ENCODE measurements at regions of chr4 and their contacts with region 1.

Region 1: DNA sequence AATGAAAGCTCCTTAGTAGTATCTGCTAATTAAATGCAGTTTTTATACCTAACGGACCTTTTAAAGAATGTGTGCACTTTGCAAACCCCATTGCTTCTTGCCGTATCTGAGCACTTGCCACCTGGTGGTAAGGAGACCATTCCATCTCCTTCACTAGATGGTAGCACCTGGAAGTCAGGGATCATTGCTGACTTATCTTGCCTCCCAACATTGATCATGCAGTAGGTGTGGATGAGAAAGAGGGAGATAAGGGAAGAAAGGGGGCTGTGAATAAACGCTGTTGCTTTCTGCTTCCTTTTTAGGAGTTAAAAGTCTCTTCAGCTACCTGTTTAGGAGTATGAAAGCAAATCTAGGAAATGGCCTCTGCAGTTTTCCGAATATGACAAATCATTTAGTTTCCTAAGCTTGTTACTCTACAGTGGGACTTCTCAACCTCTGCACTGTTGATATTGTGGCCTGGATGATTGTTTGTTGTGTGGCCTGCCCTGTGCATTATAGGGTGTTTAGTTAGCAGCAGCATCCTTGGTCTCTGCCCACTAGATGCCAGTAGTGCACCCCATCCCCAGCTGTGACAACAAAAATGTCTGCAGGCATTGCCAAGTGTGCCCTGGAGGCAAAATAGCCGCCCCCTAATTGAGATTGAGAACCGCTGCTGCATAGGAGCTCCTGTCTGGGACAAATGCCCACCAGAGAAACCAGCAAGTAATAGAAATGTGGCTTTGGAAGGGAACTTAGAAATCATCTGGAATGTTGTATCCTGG is 38.8 kb downstream of the GAB1 start:
- DNase-seq: no peak
- H3K4me3 ChIP-seq: peak overlapping the region in 1 of 4 donors; percentile 4
- H3K27ac ChIP-seq: peak overlapping the region; percentile 75 to 84 (median 82)
- H3K4me1 ChIP-seq: peaks cover 74 to 87% (median 87%) of the 10 kb centered on the region in 4 donors
- H3K27me3 ChIP-seq: no peaks in the 10 kb centered on the region
- CTCF ChIP-seq: peak; percentile 26 to 48 (median 36)
- EP300 ChIP-seq: no peak
- POLR2A ChIP-seq: no peak

Region 2: DNA sequence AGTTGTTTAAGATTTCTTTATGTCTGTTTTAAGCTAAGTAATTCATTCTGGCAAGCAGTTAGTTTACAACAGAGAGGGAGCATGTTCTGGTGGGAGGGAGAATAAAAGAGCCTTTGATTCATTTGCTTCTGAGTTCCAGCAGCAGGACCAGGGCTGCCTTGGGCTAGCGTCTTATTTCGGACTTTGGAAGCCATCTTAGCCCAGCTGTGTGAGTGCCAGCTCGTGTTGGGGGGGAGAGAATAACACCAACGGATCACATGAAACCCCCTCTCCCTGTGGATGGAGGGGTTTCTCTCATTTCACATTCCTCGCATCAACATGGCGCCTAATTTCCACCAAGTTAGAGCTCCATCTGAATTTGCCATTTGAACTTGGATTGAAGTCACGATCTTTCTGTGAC is 31.5 kb before region 1 on chr4:
- intact Hi-C with region 1: loop called (anchors 5 kb)
- DNase-seq: no peak
- H3K4me3 ChIP-seq: peak overlapping the region; percentile 1 to 19 (median 6)
- H3K27ac ChIP-seq: peak overlapping the region in 2 of 4 donors; percentile 59 to 65
- H3K4me1 ChIP-seq: peaks cover 28 to 61% (median 41%) of the 10 kb centered on the region in 4 donors
- H3K27me3 ChIP-seq: no peaks in the 10 kb centered on the region
- CTCF ChIP-seq: no peak
- EP300 ChIP-seq: no peak
- POLR2A ChIP-seq: no peak

Region 3: DNA sequence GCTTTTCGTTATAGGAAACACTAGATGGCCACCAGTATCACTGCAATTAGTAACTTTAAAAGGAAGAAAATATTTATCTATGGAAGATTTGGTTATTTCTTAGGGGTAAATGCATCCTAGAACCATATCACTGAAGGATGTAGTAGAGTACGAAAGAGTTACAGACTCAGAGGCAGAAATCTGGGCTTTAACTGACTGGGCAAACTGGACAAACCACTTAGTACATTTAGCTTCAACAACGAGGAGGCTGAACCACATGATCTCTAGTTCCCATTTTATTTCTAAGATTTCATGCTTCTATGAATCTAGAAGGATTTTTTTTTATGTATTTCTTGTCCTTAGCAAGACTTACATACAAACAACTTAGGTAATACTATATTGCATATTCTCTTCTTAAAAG is 231.0 kb after region 1 on chr4:
- intact Hi-C with region 1: no loop called
- DNase-seq: no peak
- H3K4me3 ChIP-seq: no peak overlapping the region
- H3K27ac ChIP-seq: no peak overlapping the region
- H3K4me1 ChIP-seq: peaks cover 0 to 8% (median 3%) of the 10 kb centered on the region in 4 donors
- H3K27me3 ChIP-seq: no peaks in the 10 kb centered on the region
- CTCF ChIP-seq: no peak
- EP300 ChIP-seq: no peak
- POLR2A ChIP-seq: no peak

Measured in esophagus muscularis mucosa (tissue), 4 donors.